HAP-1 (cell line): ENCODE measurements at regions of chr1 and their contacts with region 1.

Region 1: GRCh38 chr1:94061513-94062443 is 59.2 kb downstream of the ABCA4 start:
- DNase-seq: peak; percentile 63 to 80
- H3K4me3 ChIP-seq: no peak overlapping the region
- H3K4me1 ChIP-seq: no peaks in the 10 kb centered on the region; the same call in 1 of the 2 replicates
- H3K27me3 ChIP-seq: no peaks in the 10 kb centered on the region

Region 2: GRCh38 chr1:94345148-94345721 is 283.5 kb after region 1 on chr1:
- in situ Hi-C with region 1: loop called (anchors 10 kb)
- DNase-seq: no peak
- H3K4me3 ChIP-seq: no peak overlapping the region
- H3K4me1 ChIP-seq: no peaks in the 10 kb centered on the region
- H3K27me3 ChIP-seq: peaks cover 7% of the 10 kb centered on the region

Region 3: GRCh38 chr1:94468708-94469107 is 406.9 kb after region 1 on chr1:
- in situ Hi-C with region 1: loop called (anchors 5 kb)
- DNase-seq: no peak
- H3K4me3 ChIP-seq: no peak overlapping the region
- H3K4me1 ChIP-seq: peaks cover 3% of the 10 kb centered on the region
- H3K27me3 ChIP-seq: no peaks in the 10 kb centered on the region